ENCODE measurements at regions of chr2 and their contacts with region 1.

Region 1: GRCh38 chr2:237911363-237912017 is 52.1 kb downstream of the RAMP1 start:
- DNase-seq: no peak
- H3K4me3 ChIP-seq: no peak overlapping the region
- CTCF ChIP-seq: no peak

Region 2: DNA sequence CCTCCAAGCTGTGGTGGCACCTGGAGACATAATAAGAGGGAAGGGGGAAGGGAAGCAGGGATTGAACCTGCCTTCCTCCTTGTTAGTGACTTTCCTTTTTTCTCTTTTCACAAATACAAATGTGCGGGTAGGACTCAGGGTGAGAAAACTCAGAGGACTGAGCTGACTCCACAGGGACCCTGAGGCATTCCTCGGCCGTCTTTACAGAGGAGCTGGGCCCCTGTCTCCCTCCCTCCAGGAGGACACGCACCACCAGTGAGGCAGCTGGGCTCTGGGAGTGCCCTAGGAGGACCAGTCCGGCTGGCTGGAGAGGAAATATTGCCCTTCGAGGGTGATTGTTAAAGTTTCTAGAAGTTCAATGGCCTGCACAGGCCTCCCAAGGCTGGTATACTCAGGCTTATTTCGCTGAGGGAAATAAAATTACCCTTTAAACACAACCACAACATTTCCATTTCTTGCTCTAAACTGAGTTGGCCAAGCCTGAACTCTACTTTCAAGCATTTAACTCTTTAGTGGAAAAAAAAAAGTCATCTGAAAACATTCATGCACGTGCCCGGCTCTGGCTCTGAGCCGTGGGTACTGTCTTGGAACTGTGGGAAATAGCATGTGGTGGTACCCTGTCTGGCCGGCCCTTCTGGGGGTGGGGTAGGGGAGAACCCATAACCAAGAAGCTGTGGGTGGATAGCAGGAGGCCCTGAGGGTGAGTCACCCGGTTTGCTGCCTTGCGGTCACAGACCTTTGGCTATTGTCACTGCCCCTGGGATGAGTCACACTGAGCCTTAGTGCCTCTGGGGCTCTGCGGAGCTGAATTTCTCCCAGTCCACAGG is 709.8 kb before region 1 on chr2:
- in situ Hi-C with region 1: no loop called
- DNase-seq: peak; percentile 89
- H3K4me3 ChIP-seq: no peak overlapping the region
- CTCF ChIP-seq: no peak

Region 3: DNA sequence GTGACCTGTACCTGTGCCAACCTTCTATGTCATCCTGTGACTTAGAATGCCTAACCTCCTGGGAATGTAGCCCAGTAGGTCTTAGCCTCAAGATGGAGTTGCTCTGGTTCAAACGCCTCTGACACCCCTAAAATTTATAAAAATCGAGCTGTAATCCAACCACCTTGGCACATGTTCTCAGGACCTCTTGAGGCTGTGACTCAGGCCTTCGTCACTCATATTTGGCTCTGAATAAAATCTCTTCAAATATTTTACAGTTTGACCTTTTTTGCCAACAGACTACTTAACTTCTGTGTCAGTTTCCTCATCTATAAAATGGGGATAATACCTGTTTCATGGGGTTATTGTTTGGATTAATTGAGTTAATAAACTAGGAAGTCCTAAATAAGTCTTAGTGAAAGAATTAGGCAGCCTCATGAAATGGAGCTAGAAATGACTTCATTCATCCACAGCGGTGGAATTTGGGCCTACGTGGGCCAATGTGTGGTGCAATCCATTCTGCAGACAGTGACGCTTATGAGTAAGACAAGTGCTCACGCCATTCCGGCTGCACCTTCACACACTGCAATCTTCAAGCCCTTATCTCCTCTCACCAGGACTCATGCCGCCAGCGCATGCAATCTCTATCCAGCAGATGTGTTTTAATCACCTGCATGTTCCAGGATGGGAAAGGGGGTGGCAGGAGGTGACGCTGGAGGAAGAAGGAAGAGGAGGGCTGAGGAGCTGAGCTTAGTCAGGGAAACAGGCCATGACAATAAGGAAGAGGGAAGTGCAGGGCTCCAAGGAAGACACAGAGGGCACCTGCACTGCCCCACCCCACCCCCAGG is 53.3 kb after region 1 on chr2:
- in situ Hi-C with region 1: loop called (anchors 5 kb)
- DNase-seq: no peak
- H3K4me3 ChIP-seq: no peak overlapping the region
- CTCF ChIP-seq: no peak

Measured in astrocyte of the cerebellum (primary cell).